Prostate gland (tissue), 2 donors: ENCODE measurements at regions of chr5 and their contacts with region 1.

Region 1: GRCh38 chr5:72307968-72308852 is 11.8 kb downstream of the MRPS27 start:
- DNase-seq: peak; percentile 98
- H3K4me3 ChIP-seq: peak overlapping the region; percentile 60 to 65
- H3K27ac ChIP-seq: peak overlapping the region; percentile 92 to 94
- H3K4me1 ChIP-seq: no peaks in the 10 kb centered on the region
- H3K27me3 ChIP-seq: no peaks in the 10 kb centered on the region
- CTCF ChIP-seq: peak; percentile 91 to 99 (median 97)
- POLR2A ChIP-seq: peak; percentile 97

Region 2: GRCh38 chr5:71782771-71783770 is 525.1 kb before region 1 on chr5:
- intact Hi-C with region 1: loop called (anchors 1 kb)
- DNase-seq: peak; percentile 75
- H3K4me3 ChIP-seq: peak overlapping the region in 1 of 2 donors; percentile 13
- H3K27ac ChIP-seq: peak overlapping the region; percentile 32 to 34
- H3K4me1 ChIP-seq: no peaks in the 10 kb centered on the region
- H3K27me3 ChIP-seq: no peaks in the 10 kb centered on the region
- CTCF ChIP-seq: peak; percentile 51 to 85 (median 82)
- POLR2A ChIP-seq: no peak

Region 3: DNA sequence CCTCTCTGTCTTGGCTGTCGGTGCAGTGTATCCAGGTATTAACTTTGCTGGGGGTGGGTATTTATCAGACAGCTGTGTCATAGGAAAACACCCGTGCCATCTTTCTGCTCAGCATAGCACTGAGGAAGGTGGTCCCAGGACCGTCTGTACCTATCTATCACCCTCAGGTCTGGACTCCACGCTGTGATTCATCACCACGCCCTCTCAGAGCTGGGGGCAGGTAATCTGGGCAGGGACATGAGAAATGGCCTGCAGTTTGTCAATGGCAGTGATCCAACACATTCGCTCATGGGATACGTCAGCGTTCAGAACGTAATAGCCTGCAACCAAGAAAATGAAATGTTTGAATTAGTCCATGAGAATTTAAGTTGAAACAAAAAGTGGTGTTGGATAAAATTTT is 352.5 kb before region 1 on chr5:
- intact Hi-C with region 1: loop called (anchors 10 kb)
- DNase-seq: no peak
- H3K4me3 ChIP-seq: no peak overlapping the region
- H3K27ac ChIP-seq: no peak overlapping the region
- H3K4me1 ChIP-seq: peaks cover 6% of the 10 kb centered on the region
- H3K27me3 ChIP-seq: no peaks in the 10 kb centered on the region
- CTCF ChIP-seq: no peak
- POLR2A ChIP-seq: no peak

Region 4: GRCh38 chr5:72108202-72109061 is 199.8 kb before region 1 on chr5:
- intact Hi-C with region 1: loop called (anchors 5 kb)
- DNase-seq: peak; percentile 27
- H3K4me3 ChIP-seq: peak overlapping the region; percentile 46 to 54
- H3K27ac ChIP-seq: peak overlapping the region; percentile 63 to 64
- H3K4me1 ChIP-seq: no peaks in the 10 kb centered on the region
- H3K27me3 ChIP-seq: no peaks in the 10 kb centered on the region
- CTCF ChIP-seq: no peak
- POLR2A ChIP-seq: no peak

Region 5: DNA sequence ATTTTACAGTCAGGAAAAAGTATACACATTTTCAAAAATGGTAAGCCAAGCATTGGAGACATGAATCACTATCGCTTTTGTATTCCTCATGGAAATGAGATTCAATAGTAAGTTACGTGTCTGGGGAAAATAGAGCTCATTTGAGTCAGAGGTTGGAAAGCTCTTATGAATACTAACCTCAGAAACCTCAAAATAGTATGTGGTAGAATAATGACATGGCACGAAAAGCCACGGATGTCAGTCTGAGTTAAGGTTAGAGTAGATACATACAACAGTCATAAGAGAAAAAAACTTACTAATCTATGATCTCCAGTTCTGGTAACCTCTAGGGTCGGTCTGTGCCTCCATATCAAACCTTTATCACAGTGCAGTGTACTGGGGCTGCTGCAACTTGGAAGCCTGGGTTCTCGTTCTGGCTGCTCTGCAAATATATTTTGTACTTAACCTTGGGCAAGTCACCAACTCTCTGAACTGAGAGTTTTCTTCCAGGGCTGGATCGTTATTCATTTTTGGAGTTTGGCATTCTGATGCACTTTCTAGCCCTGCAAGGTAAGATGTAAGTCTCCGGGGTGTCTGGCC is 169.2 kb before region 1 on chr5:
- intact Hi-C with region 1: loop called (anchors 10 kb)
- DNase-seq: no peak
- H3K4me3 ChIP-seq: no peak overlapping the region
- H3K27ac ChIP-seq: no peak overlapping the region
- H3K4me1 ChIP-seq: no peaks in the 10 kb centered on the region
- H3K27me3 ChIP-seq: no peaks in the 10 kb centered on the region
- CTCF ChIP-seq: no peak
- POLR2A ChIP-seq: no peak

Region 6: DNA sequence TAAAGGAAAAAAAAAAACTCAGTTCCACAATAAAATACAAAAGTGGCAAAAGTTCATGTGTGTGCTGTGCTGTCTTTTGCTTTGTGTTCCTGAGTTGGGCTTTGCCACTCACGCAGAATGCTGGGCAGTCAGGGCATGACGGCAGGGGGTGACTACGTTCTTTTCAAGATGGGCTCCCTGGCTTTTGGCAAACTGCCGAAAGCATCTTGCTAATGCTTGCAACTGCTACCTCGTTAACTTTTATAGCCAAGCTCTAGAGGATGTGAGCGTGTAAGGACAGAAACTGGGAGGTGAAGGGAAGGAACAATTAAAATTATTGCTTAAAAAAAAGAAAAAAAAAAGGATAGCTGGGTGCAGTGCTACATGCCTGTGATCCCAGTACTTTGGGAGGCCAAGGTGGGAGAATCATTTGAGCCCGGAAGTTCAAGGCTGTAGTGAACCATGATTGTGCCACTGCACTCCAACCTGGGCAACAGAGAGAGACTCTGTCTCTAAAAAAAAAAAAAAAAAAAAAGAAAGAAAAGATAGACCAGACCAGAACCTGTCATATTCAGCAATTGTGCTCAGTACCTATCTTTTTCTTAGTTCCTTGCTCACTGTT is 98.6 kb before region 1 on chr5:
- intact Hi-C with region 1: loop called (anchors 5 kb)
- DNase-seq: peak; percentile 90
- H3K4me3 ChIP-seq: no peak overlapping the region
- H3K27ac ChIP-seq: peak overlapping the region in 1 of 2 donors; percentile 1
- H3K4me1 ChIP-seq: peaks cover 2% of the 10 kb centered on the region
- H3K27me3 ChIP-seq: no peaks in the 10 kb centered on the region
- CTCF ChIP-seq: peak in 3 of 4 experiments; percentile 9 to 31 (median 21)
- POLR2A ChIP-seq: no peak

Region 7: DNA sequence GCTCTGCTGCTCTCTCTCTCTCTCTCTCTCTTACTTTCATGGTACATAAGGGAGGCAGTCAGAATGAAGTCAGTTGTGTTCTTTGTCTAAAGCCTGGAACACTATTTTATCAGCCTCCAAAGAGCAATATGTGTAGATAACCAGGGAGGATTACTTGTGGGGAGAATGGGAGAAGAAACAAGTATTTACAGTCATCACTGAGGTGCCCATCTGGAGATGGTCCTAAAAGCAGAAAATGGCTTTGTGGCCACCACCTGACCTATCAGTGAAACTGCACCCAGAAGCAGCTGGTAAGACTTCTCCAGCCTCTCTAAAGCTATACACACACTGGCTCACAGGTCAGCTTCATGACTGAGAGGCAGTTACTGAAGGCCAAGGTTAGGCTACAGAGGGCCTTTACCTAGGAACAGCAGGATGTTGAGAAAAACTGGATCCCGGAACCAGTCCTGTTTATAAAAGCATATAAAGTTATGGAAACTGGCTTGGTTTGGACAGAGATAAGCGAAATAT is 63.3 kb before region 1 on chr5:
- intact Hi-C with region 1: loop called (anchors 10 kb)
- DNase-seq: no peak
- H3K4me3 ChIP-seq: no peak overlapping the region
- H3K27ac ChIP-seq: peak overlapping the region; percentile 35 to 58
- H3K4me1 ChIP-seq: no peaks in the 10 kb centered on the region
- H3K27me3 ChIP-seq: no peaks in the 10 kb centered on the region
- CTCF ChIP-seq: peak in 2 of 4 experiments; percentile 8 to 30
- POLR2A ChIP-seq: no peak

Region 8: DNA sequence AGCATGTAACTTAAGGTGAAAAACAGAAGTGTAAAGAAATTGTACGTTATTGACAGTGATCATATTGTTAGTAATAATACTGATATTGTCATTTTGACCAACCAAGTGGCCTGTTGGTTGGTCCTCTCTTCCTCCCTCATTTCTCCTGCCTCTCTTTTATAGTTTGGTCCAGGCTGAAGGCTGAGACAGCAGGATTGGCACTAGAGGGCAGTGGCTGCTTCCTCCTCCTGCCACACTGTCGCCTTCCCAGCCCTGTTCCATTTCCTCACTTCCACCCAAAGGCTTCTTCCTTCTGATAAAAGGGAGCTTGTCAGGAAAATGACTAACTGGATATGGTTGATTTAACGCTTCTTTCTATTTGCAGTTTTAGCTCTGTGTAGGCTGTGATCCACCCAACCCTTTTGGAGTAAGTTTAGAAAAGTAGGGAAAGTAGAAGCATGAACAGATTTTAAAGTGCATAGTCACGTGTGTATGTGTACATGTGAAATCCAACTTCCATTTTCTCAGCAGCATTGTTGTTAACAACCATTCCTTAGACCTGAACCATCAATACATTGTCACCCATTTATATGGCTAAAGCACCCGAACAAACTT is 47.6 kb after region 1 on chr5:
- intact Hi-C with region 1: no loop called
- DNase-seq: no peak
- H3K4me3 ChIP-seq: no peak overlapping the region
- H3K27ac ChIP-seq: no peak overlapping the region
- H3K4me1 ChIP-seq: no peaks in the 10 kb centered on the region
- H3K27me3 ChIP-seq: no peaks in the 10 kb centered on the region
- CTCF ChIP-seq: peak in 2 of 4 experiments; percentile 25 to 37
- POLR2A ChIP-seq: no peak